Esophagus squamous epithelium (tissue), 5 donors: ENCODE measurements at regions of chr6 and their contacts with region 1.

Region 1: GRCh38 chr6:106979427-106979884 is 4.9 kb upstream of the CD24 start:
- DNase-seq: peak; percentile 21
- H3K4me3 ChIP-seq: no peak overlapping the region
- H3K27ac ChIP-seq: no peak overlapping the region
- H3K4me1 ChIP-seq: peaks cover under 1 to 22% (median 3%) of the 10 kb centered on the region in 3 donors
- H3K27me3 ChIP-seq: peaks cover 0 to 76% (median 3%) of the 10 kb centered on the region in 4 donors
- CTCF ChIP-seq: peak; percentile 81 to 97 (median 94)
- POLR2A ChIP-seq: no peak

Region 2: DNA sequence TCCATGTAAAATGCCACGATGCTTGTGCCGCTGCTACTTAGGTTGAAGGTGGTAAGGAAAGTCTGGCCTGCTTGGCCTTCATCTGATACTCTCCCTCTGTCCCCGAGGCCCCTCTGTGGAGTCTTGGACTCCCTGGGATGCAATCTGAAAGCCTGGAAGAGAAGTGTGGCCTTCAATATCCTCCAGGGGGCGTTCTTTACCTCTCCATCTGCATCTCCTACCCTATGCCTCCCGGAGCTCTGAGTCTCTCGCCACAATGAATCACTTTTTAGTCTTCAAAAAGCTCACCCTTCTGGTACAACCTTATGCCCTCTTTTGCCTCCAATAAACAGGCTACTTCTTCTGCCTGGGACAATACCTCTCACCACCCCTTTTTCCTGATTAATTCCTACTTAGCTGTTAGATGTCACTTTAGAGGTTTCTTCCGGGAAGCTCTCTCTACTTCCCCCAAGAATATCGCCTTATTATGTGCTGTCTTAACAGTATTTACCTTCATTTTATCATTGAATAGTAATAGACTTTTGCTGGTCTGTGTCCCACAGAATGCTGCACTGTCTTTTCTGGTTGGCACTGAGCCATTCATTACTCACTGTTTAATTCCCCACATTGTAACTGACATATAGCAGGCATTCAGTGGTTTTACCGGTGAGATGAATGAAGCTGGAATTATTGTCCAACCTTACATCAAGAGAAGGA is 640.0 kb before region 1 on chr6:
- intact Hi-C with region 1: loop called (anchors 5 kb)
- DNase-seq: no peak
- H3K4me3 ChIP-seq: peak overlapping the region in 1 of 4 donors; percentile 30
- H3K27ac ChIP-seq: peak overlapping the region in 2 of 4 donors; percentile 63 to 71
- H3K4me1 ChIP-seq: peaks cover 0 to 26% (median 4%) of the 10 kb centered on the region in 3 donors
- H3K27me3 ChIP-seq: no peaks in the 10 kb centered on the region
- CTCF ChIP-seq: peak; percentile 53 to 85 (median 68)
- POLR2A ChIP-seq: no peak

Region 3: GRCh38 chr6:106574741-106575458 is 404.6 kb before region 1 on chr6:
- intact Hi-C with region 1: loop called (anchors 10 kb)
- DNase-seq: no peak
- H3K4me3 ChIP-seq: no peak overlapping the region
- H3K27ac ChIP-seq: peak overlapping the region in 2 of 4 donors; percentile 5 to 16
- H3K4me1 ChIP-seq: no peaks in the 10 kb centered on the region
- H3K27me3 ChIP-seq: no peaks in the 10 kb centered on the region
- CTCF ChIP-seq: no peak
- POLR2A ChIP-seq: no peak

Region 4: GRCh38 chr6:106608062-106608668 is 371.3 kb before region 1 on chr6:
- intact Hi-C with region 1: loop called (anchors 10 kb)
- DNase-seq: no peak
- H3K4me3 ChIP-seq: no peak overlapping the region
- H3K27ac ChIP-seq: no peak overlapping the region
- H3K4me1 ChIP-seq: no peaks in the 10 kb centered on the region
- H3K27me3 ChIP-seq: no peaks in the 10 kb centered on the region
- CTCF ChIP-seq: peak; percentile 47 to 81 (median 68)
- POLR2A ChIP-seq: no peak

Region 5: DNA sequence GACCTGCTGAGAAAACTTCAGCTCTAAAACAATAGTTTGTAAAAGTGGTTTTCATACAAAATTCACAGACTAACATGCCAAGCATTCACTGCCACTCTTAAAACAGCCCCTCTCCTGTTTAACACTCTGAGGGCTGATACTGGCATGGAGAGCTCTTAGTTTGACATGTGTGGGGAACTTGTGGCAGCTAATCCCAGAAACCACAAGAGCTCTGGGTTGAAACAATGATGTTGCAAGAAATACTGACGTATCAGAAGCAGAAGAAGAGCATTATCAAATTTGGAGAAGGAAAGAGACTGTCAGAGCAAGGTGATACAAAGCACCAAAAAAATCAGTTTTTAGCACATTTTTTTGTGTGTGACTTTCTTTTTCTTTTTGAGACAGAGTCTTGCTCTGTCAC is 130.7 kb after region 1 on chr6:
- intact Hi-C with region 1: no loop called
- DNase-seq: no peak
- H3K4me3 ChIP-seq: no peak overlapping the region
- H3K27ac ChIP-seq: no peak overlapping the region
- H3K4me1 ChIP-seq: peaks cover 7 to 9% (median 9%) of the 10 kb centered on the region in 3 donors
- H3K27me3 ChIP-seq: no peaks in the 10 kb centered on the region
- CTCF ChIP-seq: no peak
- POLR2A ChIP-seq: no peak